ENCODE measurements at regions of chrX and their contacts with region 1.

Region 1: DNA sequence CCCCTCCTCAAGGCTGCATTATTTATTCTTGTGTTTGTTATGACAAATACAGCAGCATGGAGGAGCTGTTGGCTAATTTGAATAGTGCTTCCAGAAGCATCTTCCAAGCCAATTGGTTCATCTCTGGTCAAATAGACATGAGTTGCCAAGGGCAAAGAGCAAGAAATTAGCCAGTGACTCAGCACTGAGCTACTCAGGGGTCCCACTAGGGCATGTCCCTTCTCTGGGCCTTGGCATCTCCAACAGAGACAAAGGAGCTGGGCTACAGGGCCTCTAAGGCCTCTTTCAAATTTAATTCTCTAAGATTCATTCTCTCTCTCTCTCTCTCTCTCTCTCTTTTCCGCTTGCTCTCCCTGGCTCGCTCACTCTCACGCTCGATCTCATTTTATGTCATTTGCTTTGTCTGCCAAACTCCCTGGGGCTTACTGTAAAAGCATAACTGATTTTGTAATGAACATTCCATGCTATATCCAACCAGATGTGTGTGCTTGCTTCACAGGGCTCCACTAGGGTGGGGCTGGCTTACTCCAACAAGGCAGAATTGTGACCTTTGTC is 86.7 kb upstream of the MAGEA4 start:
- DNase-seq: peak; percentile 89
- H3K4me3 ChIP-seq: no peak overlapping the region
- H3K27me3 ChIP-seq: no peaks in the 10 kb centered on the region
- CTCF ChIP-seq: peak; percentile 45

Region 2: DNA sequence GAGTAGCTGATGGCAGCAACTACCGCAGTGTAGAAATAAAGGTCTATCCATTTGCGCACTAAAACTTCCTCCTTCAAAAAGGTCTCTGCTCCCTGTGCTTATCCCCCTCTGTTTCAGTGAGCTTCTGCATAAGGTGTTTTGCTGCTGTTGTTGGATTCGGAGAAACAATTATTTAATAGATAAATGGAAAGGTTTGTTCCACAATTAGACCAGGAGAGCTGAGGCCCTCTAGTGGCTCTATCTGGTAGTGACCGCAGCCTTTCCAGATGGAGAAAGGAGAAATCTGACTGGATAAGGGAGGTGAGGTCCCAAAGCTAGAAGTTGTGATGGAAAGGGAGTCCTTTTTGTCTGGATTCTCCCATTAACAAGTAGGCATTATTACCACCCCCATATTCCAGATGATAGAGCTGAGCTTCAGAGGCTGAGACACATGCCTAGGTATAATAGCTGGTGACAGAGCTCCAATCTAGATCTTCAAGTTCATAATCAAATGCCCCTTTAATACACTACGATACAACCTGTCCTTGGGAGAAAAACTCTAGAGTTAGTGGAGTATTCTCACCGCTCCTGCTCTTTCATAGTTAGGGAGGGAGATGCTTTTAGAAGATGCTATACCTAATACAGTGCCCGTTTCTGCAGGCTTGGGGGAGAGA is 806.6 kb after region 1 on chrX:
- CTCF ChIA-PET with region 1: interaction called, 44 read pairs
- POLR2A ChIA-PET with region 1: no interaction called
- DNase-seq: no peak
- H3K4me3 ChIP-seq: no peak overlapping the region
- H3K27me3 ChIP-seq: no peaks in the 10 kb centered on the region
- CTCF ChIP-seq: peak; percentile 77